ENCODE measurements at regions of chr16 and their contacts with region 1.

Region 1: DNA sequence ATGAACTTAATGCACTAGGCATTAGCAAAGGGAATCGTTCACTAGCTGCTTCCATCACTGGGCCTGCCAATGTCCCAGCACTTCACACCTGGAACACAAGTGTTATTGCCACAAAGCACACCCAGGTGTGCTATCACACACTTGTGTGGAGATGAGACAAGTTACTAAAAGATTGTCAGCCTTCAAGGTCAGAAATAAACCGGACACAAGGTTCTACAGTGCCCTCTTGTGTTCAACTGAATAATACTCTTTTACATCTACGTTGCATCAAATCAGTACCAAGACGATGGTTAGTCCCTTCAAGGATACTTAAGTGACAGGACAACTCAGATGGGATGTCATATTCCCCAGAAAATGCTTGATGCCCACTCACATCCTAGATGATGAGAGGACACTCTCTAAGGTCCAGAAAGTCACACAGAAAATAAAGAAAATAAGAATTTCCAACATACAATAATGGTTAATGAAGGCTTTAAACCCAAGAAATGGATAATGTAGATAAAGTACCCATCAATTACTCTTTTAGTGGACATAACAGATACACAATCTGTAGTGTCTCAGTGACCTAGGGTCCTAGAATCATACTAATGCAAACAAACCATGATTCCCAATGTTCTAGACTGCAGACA is 16.4 kb upstream of the GLG1 start:
- DNase-seq: peak in 4 of 14 experiments; percentile 13 to 73 (median 67)
- ATAC-seq: peak; percentile 55
- H3K4me3 ChIP-seq: no peak overlapping the region
- H3K4me3 Mint-ChIP-seq: no peak overlapping the region
- H3K27ac ChIP-seq: no peak overlapping the region
- H3K27ac Mint-ChIP-seq: no peak overlapping the region
- H3K4me1 ChIP-seq: peaks cover 3% of the 10 kb centered on the region
- H3K4me1 Mint-ChIP-seq: peaks cover 11% of the 10 kb centered on the region
- H3K27me3 ChIP-seq: no peaks in the 10 kb centered on the region
- H3K27me3 Mint-ChIP-seq: no peaks in the 10 kb centered on the region
- CTCF ChIP-seq: peak; percentile 78

Region 2: GRCh38 chr16:74485941-74486340 is 137.4 kb before region 1 on chr16:
- CTCF ChIA-PET with region 1: no interaction called
- POLR2A ChIA-PET with region 1: no interaction called
- intact Hi-C with region 1: loop called (anchors 5 kb)
- DNase-seq: no peak
- ATAC-seq: no peak
- H3K4me3 ChIP-seq: no peak overlapping the region
- H3K4me3 Mint-ChIP-seq: no peak overlapping the region
- H3K27ac ChIP-seq: no peak overlapping the region
- H3K27ac Mint-ChIP-seq: peak overlapping the region; percentile 64
- H3K4me1 ChIP-seq: peaks cover 8% of the 10 kb centered on the region
- H3K4me1 Mint-ChIP-seq: peaks cover 14% of the 10 kb centered on the region
- H3K27me3 ChIP-seq: no peaks in the 10 kb centered on the region
- H3K27me3 Mint-ChIP-seq: no peaks in the 10 kb centered on the region
- CTCF ChIP-seq: no peak

Region 3: DNA sequence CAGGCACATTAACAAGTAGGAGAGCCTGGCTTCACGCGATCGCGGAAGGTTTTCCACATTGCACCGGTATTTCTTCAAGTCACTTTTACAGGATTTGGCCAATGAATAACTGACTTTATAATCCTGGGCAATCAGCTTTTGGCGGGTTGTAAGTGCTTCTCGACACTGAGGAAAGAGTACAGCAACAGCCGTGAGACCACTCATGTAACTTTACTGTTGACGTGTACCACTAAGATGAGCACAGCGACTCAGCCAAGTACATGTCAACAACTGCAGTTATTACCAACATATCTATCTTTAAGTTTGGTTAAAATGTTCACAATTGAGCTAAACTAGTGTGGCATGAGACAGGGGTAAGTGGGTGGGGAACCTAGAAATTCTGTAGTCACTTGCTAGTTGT is 130.4 kb before region 1 on chr16:
- CTCF ChIA-PET with region 1: interaction called, 4 read pairs
- POLR2A ChIA-PET with region 1: no interaction called
- intact Hi-C with region 1: loop called (anchors 5 kb)
- DNase-seq: no peak
- ATAC-seq: no peak
- H3K4me3 ChIP-seq: no peak overlapping the region
- H3K4me3 Mint-ChIP-seq: no peak overlapping the region
- H3K27ac ChIP-seq: no peak overlapping the region
- H3K27ac Mint-ChIP-seq: no peak overlapping the region
- H3K4me1 ChIP-seq: no peaks in the 10 kb centered on the region
- H3K4me1 Mint-ChIP-seq: peaks cover 1% of the 10 kb centered on the region
- H3K27me3 ChIP-seq: no peaks in the 10 kb centered on the region
- H3K27me3 Mint-ChIP-seq: no peaks in the 10 kb centered on the region
- CTCF ChIP-seq: no peak

Region 4: DNA sequence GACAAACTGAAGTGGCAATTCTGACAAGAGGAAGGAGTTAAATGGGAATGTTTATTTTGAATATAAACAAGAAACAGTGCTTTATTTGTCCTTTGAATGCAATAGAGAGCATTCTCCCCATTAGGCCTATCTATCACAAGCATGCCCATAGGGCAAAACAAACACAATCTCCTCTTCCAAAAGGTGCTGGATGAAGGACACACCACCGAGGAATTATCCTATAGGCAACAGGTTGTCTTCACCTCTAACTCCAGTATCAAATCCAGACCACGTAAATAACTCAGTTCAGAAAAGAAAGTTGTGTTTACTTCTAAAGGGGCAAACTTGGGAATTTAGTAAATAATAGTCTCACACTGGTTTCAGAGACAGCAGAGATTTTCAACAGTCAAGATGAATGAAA is 118.3 kb before region 1 on chr16:
- CTCF ChIA-PET with region 1: no interaction called
- POLR2A ChIA-PET with region 1: interaction called, 3 read pairs
- intact Hi-C with region 1: loop called in 1 of 2 experiments (anchors 5 kb)
- DNase-seq: no peak
- ATAC-seq: no peak
- H3K4me3 ChIP-seq: no peak overlapping the region
- H3K4me3 Mint-ChIP-seq: no peak overlapping the region
- H3K27ac ChIP-seq: no peak overlapping the region
- H3K27ac Mint-ChIP-seq: peak overlapping the region; percentile 49
- H3K4me1 ChIP-seq: no peaks in the 10 kb centered on the region
- H3K4me1 Mint-ChIP-seq: peaks cover 29% of the 10 kb centered on the region
- H3K27me3 ChIP-seq: no peaks in the 10 kb centered on the region
- H3K27me3 Mint-ChIP-seq: no peaks in the 10 kb centered on the region
- CTCF ChIP-seq: no peak

Region 5: DNA sequence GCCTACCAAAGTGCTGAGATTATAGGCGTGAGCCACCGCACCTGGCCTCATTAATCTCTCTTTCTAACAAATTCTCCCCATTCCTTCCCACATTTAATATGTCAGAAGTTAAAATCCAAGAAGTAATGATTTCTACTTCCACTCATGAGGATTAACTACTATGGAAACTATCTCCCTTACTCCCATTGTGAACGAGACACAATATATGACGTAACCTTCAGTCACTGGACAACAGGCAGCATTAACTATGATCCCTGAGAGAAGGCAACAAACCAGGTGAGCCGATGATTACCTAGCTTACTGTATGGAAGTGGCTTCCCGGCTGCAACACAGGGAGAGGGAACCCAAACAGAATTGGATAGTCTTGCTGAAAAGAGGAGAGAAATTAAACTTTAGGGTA is 36.4 kb before region 1 on chr16:
- CTCF ChIA-PET with region 1: no interaction called
- POLR2A ChIA-PET with region 1: no interaction called
- intact Hi-C with region 1: loop called in 1 of 2 experiments (anchors 5 kb)
- DNase-seq: no peak
- ATAC-seq: no peak
- H3K4me3 ChIP-seq: no peak overlapping the region
- H3K4me3 Mint-ChIP-seq: peak overlapping the region; percentile 60
- H3K27ac ChIP-seq: no peak overlapping the region
- H3K27ac Mint-ChIP-seq: peak overlapping the region; percentile 44
- H3K4me1 ChIP-seq: peaks cover 50% of the 10 kb centered on the region
- H3K4me1 Mint-ChIP-seq: peaks cover 81% of the 10 kb centered on the region
- H3K27me3 ChIP-seq: no peaks in the 10 kb centered on the region
- H3K27me3 Mint-ChIP-seq: no peaks in the 10 kb centered on the region
- CTCF ChIP-seq: no peak

Measured in CD4-positive, alpha-beta T cell (primary cell).